ENCODE measurements at regions of chr7 and their contacts with region 1.

Region 1: DNA sequence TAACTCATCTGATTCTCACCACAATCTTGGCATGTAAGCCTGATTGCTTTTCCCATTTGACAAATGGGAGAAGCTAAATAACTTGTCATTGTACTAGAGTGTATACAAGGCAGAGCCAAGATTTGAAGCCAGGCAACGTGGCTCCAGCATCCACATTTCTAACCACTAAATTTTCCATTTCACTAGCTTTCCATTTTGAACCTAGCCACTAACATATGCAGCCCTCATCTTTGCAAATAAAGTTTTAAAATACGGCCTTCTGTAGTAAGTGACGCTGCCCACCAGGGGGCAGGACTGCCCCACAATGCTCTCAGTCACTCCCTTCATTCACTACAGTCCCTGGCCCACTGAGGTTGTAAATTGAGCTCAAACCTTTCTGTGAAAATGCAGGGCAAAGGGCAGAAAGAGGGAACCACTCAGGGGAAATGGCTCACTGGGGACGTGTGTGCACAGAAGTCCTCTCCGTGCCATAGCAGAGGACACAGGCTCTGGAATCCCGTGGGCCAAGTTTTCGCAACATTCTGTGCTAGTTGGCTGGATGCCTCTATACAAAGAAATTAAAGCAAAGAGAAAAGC is 315.7 kb downstream of the TNS3 start:
- DNase-seq: peak; percentile 48 to 78
- H3K4me3 ChIP-seq: no peak overlapping the region
- H3K27ac ChIP-seq: peak overlapping the region; percentile 26 to 45
- H3K4me1 ChIP-seq: peaks cover 0 to 18% (median 8%) of the 10 kb centered on the region in 4 donors
- H3K27me3 ChIP-seq: no peaks in the 10 kb centered on the region
- CTCF ChIP-seq: peak; percentile 94 to 95

Region 2: GRCh38 chr7:47435889-47436312 is 169.7 kb after region 1 on chr7:
- intact Hi-C with region 1: loop called (anchors 5 kb)
- DNase-seq: peak; percentile 77 to 85
- H3K4me3 ChIP-seq: no peak overlapping the region
- H3K27ac ChIP-seq: no peak overlapping the region
- H3K4me1 ChIP-seq: peaks cover 0 to 7% (median 0%) of the 10 kb centered on the region in 4 donors
- H3K27me3 ChIP-seq: no peaks in the 10 kb centered on the region
- CTCF ChIP-seq: peak; percentile 77 to 78

Region 3: GRCh38 chr7:47827351-47827756 is 561.1 kb after region 1 on chr7:
- intact Hi-C with region 1: loop called (anchors 5 kb)
- DNase-seq: no peak
- H3K4me3 ChIP-seq: no peak overlapping the region
- H3K27ac ChIP-seq: no peak overlapping the region
- H3K4me1 ChIP-seq: no peaks in the 10 kb centered on the region
- H3K27me3 ChIP-seq: no peaks in the 10 kb centered on the region
- CTCF ChIP-seq: no peak

Region 4: DNA sequence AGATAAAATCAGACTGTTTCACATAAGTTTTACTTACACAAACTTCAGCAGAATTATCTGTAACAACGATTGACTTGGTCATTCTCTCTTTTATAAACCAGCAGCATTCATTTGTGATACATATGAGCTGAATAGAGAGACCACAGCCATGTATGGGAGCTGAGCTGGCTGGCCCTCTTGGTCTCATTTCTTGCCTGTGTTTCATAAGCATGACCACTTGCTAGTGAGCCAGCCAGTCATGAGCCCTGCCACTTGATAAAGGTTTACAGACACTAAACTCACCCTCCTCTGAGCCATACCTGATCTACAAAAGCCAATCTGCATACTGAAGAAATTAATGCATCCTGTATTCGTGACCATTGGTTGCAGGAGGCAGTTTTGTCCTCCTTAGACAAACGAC is 599.9 kb after region 1 on chr7:
- intact Hi-C with region 1: no loop called
- DNase-seq: no peak
- H3K4me3 ChIP-seq: no peak overlapping the region
- H3K27ac ChIP-seq: no peak overlapping the region
- H3K4me1 ChIP-seq: no peaks in the 10 kb centered on the region
- H3K27me3 ChIP-seq: no peaks in the 10 kb centered on the region
- CTCF ChIP-seq: no peak

Measured in tibial artery (tissue), 4 donors.